ENCODE measurements at regions of chr10 and their contacts with region 1.

Region 1: GRCh38 chr10:6195846-6196245 is 6.9 kb upstream of the PFKFB3 start:
- DNase-seq: no peak
- ATAC-seq: no peak
- H3K4me3 ChIP-seq: no peak overlapping the region
- H3K4me3 Mint-ChIP-seq: no peak overlapping the region
- H3K27ac ChIP-seq: no peak overlapping the region
- H3K27ac Mint-ChIP-seq: no peak overlapping the region
- H3K4me1 ChIP-seq: no peaks in the 10 kb centered on the region
- H3K4me1 Mint-ChIP-seq: peaks cover 17% of the 10 kb centered on the region
- H3K27me3 ChIP-seq: no peaks in the 10 kb centered on the region
- H3K27me3 Mint-ChIP-seq: no peaks in the 10 kb centered on the region
- CTCF ChIP-seq: no peak

Region 2: DNA sequence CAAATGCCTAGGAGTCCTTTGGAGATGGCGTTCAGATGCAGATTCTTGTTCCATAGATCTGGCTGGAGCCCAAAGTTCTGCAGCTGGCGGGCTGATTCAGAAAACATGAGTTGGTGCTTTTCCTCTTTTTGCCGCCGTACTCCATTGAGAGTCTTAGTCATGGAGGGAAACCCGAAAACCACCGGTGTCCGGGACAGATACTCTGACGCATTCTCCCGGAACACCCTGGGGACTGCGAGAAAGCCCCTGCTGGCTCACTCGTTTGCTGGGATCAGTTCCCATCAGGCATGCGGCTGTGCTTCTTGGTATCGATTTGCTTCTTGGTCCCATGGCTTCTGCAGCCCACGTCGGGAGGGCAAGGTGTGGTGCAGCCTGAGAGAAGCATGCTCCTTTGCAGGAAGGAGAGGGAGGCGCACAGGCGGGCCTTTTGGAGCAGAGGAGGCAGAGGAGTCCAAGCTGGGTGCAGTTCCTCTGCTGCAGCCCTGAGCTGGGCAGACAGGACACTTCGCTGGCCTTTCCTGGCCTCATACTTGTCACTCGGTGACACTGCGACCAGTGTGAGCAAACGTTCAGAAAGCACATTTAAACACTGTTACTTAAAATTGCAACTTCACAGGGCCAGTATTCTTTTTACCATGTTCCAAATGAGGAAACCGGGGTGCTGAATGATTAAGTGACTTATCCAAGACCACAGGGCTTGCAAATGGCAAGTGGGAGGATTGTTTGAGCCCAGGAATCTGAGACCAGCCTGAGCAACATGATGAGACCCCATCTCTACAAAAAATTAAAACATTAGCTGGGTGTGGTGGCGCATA is 23.8 kb before region 1 on chr10:
- CTCF ChIA-PET with region 1: interaction called, 15 read pairs
- POLR2A ChIA-PET with region 1: interaction called, 26 read pairs
- intact Hi-C with region 1: loop called in 1 of 2 experiments (anchors 2 kb)
- DNase-seq: peak in 1 of 9 experiments; percentile 44
- ATAC-seq: no peak
- H3K4me3 ChIP-seq: no peak overlapping the region
- H3K4me3 Mint-ChIP-seq: no peak overlapping the region
- H3K27ac ChIP-seq: no peak overlapping the region
- H3K27ac Mint-ChIP-seq: peak overlapping the region; percentile 85
- H3K4me1 ChIP-seq: peaks cover 49% of the 10 kb centered on the region
- H3K4me1 Mint-ChIP-seq: peaks cover 83% of the 10 kb centered on the region
- H3K27me3 ChIP-seq: no peaks in the 10 kb centered on the region
- H3K27me3 Mint-ChIP-seq: no peaks in the 10 kb centered on the region
- CTCF ChIP-seq: no peak

Region 3: DNA sequence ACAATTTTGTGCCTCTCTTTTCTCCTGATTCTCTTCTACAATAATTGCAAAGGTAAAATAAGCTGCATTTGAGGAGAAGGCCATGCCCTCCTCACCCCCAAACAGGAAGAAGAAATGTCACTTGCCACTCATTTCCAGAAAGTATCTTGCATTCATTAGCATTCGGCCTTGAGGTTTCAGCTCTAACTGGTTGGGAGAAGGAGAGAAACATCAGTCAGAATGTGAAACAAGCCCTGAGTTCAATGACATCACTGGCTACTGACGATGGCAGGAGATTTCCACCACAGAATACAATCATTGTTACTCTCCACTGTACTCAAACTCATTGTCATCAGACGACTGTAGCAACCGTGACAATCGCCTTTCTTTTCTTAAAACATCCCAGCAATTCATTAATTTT is 311.5 kb after region 1 on chr10:
- CTCF ChIA-PET with region 1: no interaction called
- POLR2A ChIA-PET with region 1: no interaction called
- intact Hi-C with region 1: no loop called
- DNase-seq: peak in 2 of 9 experiments; percentile 47 to 75
- ATAC-seq: peak; percentile 75
- H3K4me3 ChIP-seq: no peak overlapping the region
- H3K4me3 Mint-ChIP-seq: no peak overlapping the region
- H3K27ac ChIP-seq: peak overlapping the region; percentile 7 to 69
- H3K27ac Mint-ChIP-seq: peak overlapping the region; percentile 80
- H3K4me1 ChIP-seq: no peaks in the 10 kb centered on the region
- H3K4me1 Mint-ChIP-seq: peaks cover 37% of the 10 kb centered on the region
- H3K27me3 ChIP-seq: no peaks in the 10 kb centered on the region
- H3K27me3 Mint-ChIP-seq: no peaks in the 10 kb centered on the region
- CTCF ChIP-seq: no peak

Region 4: DNA sequence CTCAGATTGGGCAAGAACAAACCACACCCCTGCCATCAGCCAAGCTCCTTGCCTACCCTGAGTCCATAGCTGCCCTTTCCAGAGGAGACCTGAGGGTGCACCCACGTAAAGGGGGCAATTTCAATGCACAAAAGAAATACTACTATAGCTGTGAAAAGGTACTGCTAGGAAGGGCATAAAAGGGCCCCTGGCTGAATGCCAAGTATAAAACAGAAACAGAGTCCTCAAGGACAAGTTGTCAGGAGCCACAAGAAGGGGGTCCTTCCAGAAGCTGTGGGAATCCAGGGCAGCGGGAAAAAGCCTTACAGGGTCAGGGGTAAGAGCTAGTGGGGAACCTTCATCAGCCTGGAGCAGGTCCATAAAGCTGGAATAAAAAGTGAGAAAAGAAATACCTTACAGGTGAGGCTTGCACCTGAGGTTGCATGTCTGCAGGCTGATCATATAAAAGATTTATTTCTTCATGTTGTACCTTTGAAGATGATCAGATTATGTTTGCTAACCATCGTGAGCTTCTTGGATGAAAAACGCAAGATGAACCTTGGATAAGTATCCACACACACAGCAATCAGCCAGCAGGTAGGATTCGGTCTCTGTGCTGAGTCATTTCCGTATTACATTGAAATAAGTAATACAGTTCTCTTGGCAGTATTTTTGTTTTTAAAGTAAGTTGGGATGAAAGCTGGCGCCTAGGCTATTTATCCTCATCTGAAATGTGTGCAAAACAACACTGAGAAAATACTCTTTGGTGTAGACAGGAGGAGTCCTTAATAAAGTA is 493.0 kb after region 1 on chr10:
- CTCF ChIA-PET with region 1: no interaction called
- POLR2A ChIA-PET with region 1: no interaction called
- intact Hi-C with region 1: loop called in 1 of 2 experiments (anchors 10 kb)
- DNase-seq: no peak
- ATAC-seq: no peak
- H3K4me3 ChIP-seq: no peak overlapping the region
- H3K4me3 Mint-ChIP-seq: no peak overlapping the region
- H3K27ac ChIP-seq: no peak overlapping the region
- H3K27ac Mint-ChIP-seq: no peak overlapping the region
- H3K4me1 ChIP-seq: no peaks in the 10 kb centered on the region
- H3K4me1 Mint-ChIP-seq: no peaks in the 10 kb centered on the region
- H3K27me3 ChIP-seq: no peaks in the 10 kb centered on the region
- H3K27me3 Mint-ChIP-seq: peaks cover 15% of the 10 kb centered on the region
- CTCF ChIP-seq: no peak

Measured in CD8-positive, alpha-beta T cell (primary cell).